Naive thymus-derived CD8-positive, alpha-beta T cell (primary cell): ENCODE measurements at regions of chr6 and their contacts with region 1.

Region 1: GRCh38 chr6:32843979-32844838 is at the start of gene PSMB8:
- DNase-seq: peak; percentile 85 to 99 (median 98)
- ATAC-seq: peak; percentile 74 to 81
- H3K4me3 Mint-ChIP-seq: peak within 1 kb of the TSS; percentile 92 to 100 (median 98)
- H3K27ac Mint-ChIP-seq: peak within 1 kb of the TSS; percentile 98 to 100 (median 100)
- H3K4me1 Mint-ChIP-seq: peaks cover 54 to 90% (median 81%) of the 10 kb centered on the region in 4 donors
- H3K27me3 Mint-ChIP-seq: no peaks in the 10 kb centered on the region
- polyA plus RNA-seq, gene PSMB8: 350 to 386 (median 386) TPM

Region 2: DNA sequence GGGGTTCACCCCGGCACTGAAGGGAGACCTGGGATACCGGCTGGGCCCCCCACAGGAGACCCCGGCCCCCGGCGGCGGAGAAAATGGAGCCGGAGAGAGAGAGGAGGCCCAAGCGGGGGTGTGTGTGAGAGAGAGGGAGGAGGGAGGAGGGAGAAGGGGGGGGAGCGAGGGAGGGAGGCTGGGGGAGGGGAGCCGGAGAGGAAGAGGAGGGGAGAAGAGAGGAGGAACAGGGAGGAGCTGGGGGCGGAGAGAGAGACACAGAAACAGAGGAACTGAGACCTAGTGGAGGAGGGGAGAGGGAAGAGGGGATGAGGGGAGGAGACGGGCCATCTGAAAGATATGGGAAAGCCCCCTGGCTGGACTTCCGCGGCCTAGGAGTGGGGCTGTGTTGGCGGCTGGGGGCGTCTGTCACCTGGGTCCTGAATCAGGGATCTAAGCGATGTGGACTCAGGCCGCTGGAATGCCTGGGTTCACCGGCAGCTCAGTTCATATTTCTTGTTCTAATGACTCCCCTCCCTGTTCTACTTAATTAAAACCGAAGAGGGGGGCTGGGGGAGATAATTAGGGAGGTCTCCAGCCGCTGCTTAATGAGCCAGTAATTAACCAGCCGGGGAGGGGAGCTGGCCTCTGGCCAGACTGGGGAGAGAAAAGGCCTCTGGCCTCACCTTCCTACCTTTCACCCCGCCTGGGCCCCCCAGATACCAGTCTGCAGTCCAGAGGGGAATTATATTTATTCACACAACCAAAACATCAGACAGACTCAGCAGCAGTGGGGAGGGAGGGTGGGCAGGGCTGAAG is 654.0 kb before region 1 on chr6 and contains the start of gene PBX2:
- POLR2A ChIA-PET with region 1: interaction called, 11 read pairs
- DNase-seq: peak; percentile 52 to 92 (median 68)
- ATAC-seq: peak; percentile 40 to 58
- H3K4me3 Mint-ChIP-seq: peak within 1 kb of the TSS; percentile 94 to 100 (median 98)
- H3K27ac Mint-ChIP-seq: peak within 1 kb of the TSS; percentile 91 to 100 (median 98)
- H3K4me1 Mint-ChIP-seq: peaks cover 49 to 79% (median 65%) of the 10 kb centered on the region in 4 donors
- H3K27me3 Mint-ChIP-seq: no peaks in the 10 kb centered on the region
- polyA plus RNA-seq, gene PBX2: 1.6 to 2.2 (median 2.0) TPM

Region 3: GRCh38 chr6:32195652-32195901 is 648.6 kb before region 1 on chr6:
- POLR2A ChIA-PET with region 1: interaction called, 11 read pairs
- DNase-seq: peak; percentile 96 to 100 (median 99)
- ATAC-seq: peak; percentile 82 to 85
- H3K4me3 Mint-ChIP-seq: peak overlapping the region; percentile 92 to 100 (median 97)
- H3K27ac Mint-ChIP-seq: peak overlapping the region; percentile 94 to 100 (median 99)
- H3K4me1 Mint-ChIP-seq: peaks cover 29 to 49% (median 42%) of the 10 kb centered on the region in 4 donors
- H3K27me3 Mint-ChIP-seq: peaks cover 0 to 2% (median 0%) of the 10 kb centered on the region in 5 donors

Region 4: GRCh38 chr6:32940656-32941213 is 96.5 kb after region 1 on chr6 and contains the start of gene HLA-DMB:
- POLR2A ChIA-PET with region 1: interaction called, 13 read pairs
- DNase-seq: peak in 9 of 10 donors; percentile 42 to 80 (median 63)
- ATAC-seq: peak; percentile 83 to 85
- H3K4me3 Mint-ChIP-seq: peak within 1 kb of the TSS; percentile 84 to 97 (median 94)
- H3K27ac Mint-ChIP-seq: peak within 1 kb of the TSS; percentile 88 to 98 (median 97)
- H3K4me1 Mint-ChIP-seq: peaks cover 43 to 92% (median 64%) of the 10 kb centered on the region in 4 donors
- H3K27me3 Mint-ChIP-seq: no peaks in the 10 kb centered on the region
- polyA plus RNA-seq, gene HLA-DMB: 10.8 to 22.5 (median 16.8) TPM